Mammary epithelial cell (primary cell): ENCODE measurements at regions of chr10 and their contacts with region 1.

Region 1: GRCh38 chr10:132536971-132537712 is 445 bp upstream of the INPP5A start:
- DNase-seq: peak; percentile 99
- H3K4me3 ChIP-seq: peak overlapping the region; percentile 45 to 83 (median 73)
- H3K27ac ChIP-seq: no peak overlapping the region
- H3K4me1 ChIP-seq: peaks cover 28% of the 10 kb centered on the region
- H3K27me3 ChIP-seq: no peaks in the 10 kb centered on the region
- CTCF ChIP-seq: no peak

Region 2: DNA sequence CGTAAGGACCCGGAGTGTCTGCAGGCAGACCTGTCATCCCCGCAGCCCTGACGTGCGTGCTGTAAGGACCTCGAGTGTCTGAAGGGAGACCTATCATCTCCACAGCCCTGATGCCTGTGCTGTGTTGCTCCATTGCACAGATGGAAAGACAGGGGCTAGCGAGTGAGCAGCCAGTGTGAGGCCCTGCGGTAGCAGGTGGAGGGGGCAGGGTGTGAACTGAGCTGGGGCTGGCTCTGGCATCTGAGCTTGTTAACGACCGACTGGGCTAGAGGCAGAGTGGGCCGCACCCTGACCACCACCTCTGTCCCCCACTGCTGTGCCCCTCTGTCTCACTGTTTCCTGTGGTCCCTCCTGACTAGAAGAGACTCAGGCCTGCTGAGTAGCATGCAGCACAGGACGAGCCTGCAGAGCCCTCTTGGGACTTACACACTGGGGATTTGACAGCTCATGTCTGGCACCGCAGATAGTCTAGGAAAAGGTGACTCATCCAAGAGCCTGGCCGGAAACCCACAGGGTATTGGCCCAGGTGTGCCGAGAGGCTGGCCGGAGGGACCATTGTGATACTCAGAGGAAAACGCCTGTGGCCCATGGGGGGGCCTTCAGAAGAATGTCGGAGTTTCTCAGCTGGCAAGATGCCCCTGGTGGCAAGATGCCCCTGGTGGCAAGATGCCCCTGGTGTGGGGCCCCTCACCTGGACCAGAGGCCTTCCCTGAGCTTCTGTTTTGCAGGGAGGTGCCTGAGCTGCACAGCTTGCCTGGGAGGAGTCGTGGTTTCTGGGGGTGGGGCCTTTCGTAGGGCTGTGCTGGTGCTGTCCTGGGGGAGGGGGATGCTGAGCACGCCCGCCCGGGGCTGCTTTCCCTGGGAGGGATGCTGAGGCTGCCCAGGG is 34.8 kb after region 1 on chr10:
- CTCF ChIA-PET with region 1: no interaction called
- dilution Hi-C with region 1: no loop called
- in situ Hi-C with region 1: no loop called
- intact Hi-C with region 1: loop called (anchors 1 kb)
- DNase-seq: peak; percentile 94
- H3K4me3 ChIP-seq: peak overlapping the region in 1 of 3 experiments; percentile 49
- H3K27ac ChIP-seq: no peak overlapping the region
- H3K4me1 ChIP-seq: peaks cover 28% of the 10 kb centered on the region
- H3K27me3 ChIP-seq: no peaks in the 10 kb centered on the region
- CTCF ChIP-seq: no peak

Region 3: GRCh38 chr10:132637477-132638129 is 100.5 kb after region 1 on chr10:
- CTCF ChIA-PET with region 1: no interaction called
- dilution Hi-C with region 1: no loop called
- in situ Hi-C with region 1: no loop called
- intact Hi-C with region 1: loop called (anchors 5 kb)
- DNase-seq: peak; percentile 26
- H3K4me3 ChIP-seq: no peak overlapping the region
- H3K27ac ChIP-seq: no peak overlapping the region
- H3K4me1 ChIP-seq: no peaks in the 10 kb centered on the region
- H3K27me3 ChIP-seq: no peaks in the 10 kb centered on the region
- CTCF ChIP-seq: peak; percentile 70 to 87

Region 4: GRCh38 chr10:132961787-132962622 is 424.9 kb after region 1 on chr10:
- CTCF ChIA-PET with region 1: no interaction called
- dilution Hi-C with region 1: no loop called
- in situ Hi-C with region 1: no loop called
- intact Hi-C with region 1: no loop called
- DNase-seq: peak; percentile 56
- H3K4me3 ChIP-seq: peak overlapping the region; percentile 4 to 37 (median 4)
- H3K27ac ChIP-seq: no peak overlapping the region
- H3K4me1 ChIP-seq: no peaks in the 10 kb centered on the region
- H3K27me3 ChIP-seq: peaks cover 2% of the 10 kb centered on the region
- CTCF ChIP-seq: no peak